ENCODE measurements at regions of chr5 and their contacts with region 1.

Region 1: DNA sequence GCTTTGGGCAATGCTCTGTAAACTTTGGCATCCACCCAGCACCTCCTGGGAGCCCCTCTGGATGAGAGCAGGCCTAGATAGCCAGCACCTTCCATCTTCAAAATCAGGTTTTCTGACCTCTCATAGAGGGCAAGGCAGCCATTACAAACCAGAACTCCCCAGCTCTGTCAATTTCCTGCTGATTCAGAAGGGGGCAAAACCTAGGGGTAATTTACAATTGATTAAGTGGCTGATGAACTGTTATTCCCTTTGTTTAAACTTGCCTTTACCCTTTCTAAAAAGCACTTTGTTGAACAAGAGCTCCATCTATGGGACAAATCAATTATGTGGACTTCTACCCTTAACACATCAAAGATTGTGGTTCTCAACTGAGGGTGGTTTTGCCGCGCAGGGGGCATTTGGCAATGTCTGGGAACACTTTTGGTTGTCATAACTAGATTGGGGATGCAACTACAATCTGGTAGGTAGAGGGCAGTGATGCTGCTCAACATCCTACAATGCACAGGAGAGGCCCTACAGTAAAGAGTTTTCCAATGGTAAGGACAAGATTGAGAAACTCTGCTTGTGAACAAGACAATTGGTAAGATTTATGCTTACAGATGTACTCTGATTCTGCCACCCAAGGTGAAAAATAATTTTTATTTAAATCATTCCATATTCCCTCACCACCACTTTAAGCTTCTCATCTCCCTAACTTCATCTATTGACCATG is 184.1 kb downstream of the MARCHF11 start:
- DNase-seq: peak; percentile 67
- H3K4me3 ChIP-seq: no peak overlapping the region
- H3K27ac ChIP-seq: peak overlapping the region; percentile 20
- H3K4me1 ChIP-seq: peaks cover 27% of the 10 kb centered on the region
- H3K27me3 ChIP-seq: peaks cover 0 to 2% of the 10 kb centered on the region in 2 experiments
- CTCF ChIP-seq: peak; percentile 54 to 60
- POLR2A ChIP-seq: no peak

Region 2: GRCh38 chr5:15013654-15014463 is 981.6 kb before region 1 on chr5:
- CTCF ChIA-PET with region 1: no interaction called
- POLR2A ChIA-PET with region 1: no interaction called
- dilution Hi-C with region 1: no loop called
- intact Hi-C with region 1: loop called (anchors 5 kb)
- DNase-seq: peak; percentile 74
- H3K4me3 ChIP-seq: no peak overlapping the region
- H3K27ac ChIP-seq: no peak overlapping the region
- H3K4me1 ChIP-seq: peaks cover 11% of the 10 kb centered on the region
- H3K27me3 ChIP-seq: peaks cover 0 to 5% of the 10 kb centered on the region in 2 experiments
- CTCF ChIP-seq: peak; percentile 38 to 39
- POLR2A ChIP-seq: no peak

Region 3: DNA sequence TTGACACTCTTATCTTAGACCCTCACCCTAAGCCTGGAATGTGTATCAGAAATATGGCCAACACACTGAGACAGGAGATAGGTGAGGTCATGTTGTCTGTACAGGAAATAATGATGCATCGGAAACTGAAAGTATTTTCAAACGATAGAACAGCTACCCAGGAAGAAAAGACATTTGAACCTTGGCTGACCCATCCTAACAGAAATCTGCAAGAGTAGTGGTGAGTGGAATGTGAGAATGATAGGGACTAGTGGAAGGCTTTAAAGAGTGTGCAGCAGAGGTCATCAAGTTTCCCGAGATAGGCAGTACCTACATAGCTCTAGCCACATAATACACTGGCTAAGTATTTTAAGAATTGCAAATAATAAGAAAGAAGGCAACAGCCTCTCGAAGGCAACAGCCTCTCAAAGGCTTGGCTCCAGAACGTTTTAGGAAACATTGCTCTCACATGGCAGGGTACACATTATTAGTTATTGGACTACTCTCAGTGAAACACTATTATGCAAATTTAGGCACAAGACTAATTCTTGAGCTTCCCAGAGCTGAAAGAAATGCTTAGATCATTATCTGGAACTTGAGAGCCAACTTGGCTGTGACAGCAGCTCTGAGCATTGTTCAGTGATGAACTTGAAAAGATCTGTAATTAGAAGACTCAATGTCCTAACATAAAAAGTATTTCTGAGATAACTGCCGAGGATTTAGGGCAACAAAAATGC is 628.7 kb before region 1 on chr5:
- CTCF ChIA-PET with region 1: interaction called, 6 read pairs
- POLR2A ChIA-PET with region 1: no interaction called
- dilution Hi-C with region 1: no loop called
- intact Hi-C with region 1: loop called (anchors 1 kb)
- DNase-seq: peak; percentile 91
- H3K4me3 ChIP-seq: no peak overlapping the region
- H3K27ac ChIP-seq: peak overlapping the region; percentile 83
- H3K4me1 ChIP-seq: peaks cover 43% of the 10 kb centered on the region
- H3K27me3 ChIP-seq: no peaks in the 10 kb centered on the region
- CTCF ChIP-seq: no peak
- POLR2A ChIP-seq: no peak

Region 4: GRCh38 chr5:15499528-15500324 is 495.8 kb before region 1 on chr5 and contains the start of gene FBXL7:
- CTCF ChIA-PET with region 1: interaction called, 21 read pairs
- POLR2A ChIA-PET with region 1: no interaction called
- dilution Hi-C with region 1: no loop called
- intact Hi-C with region 1: loop called (anchors 1 kb)
- DNase-seq: peak; percentile 81
- H3K4me3 ChIP-seq: peak within 1 kb of the TSS; percentile 83 to 98 (median 88)
- H3K27ac ChIP-seq: peak within 1 kb of the TSS; percentile 66
- H3K4me1 ChIP-seq: peaks cover 34% of the 10 kb centered on the region
- H3K27me3 ChIP-seq: no peaks in the 10 kb centered on the region
- CTCF ChIP-seq: peak in 1 of 2 donors; percentile 24
- POLR2A ChIP-seq: peak; percentile 88
- total RNA-seq, gene FBXL7: 28.6 and 32.2 TPM in 2 replicates

Region 5: GRCh38 chr5:15794052-15794985 is 201.2 kb before region 1 on chr5:
- CTCF ChIA-PET with region 1: interaction called, 24 read pairs
- POLR2A ChIA-PET with region 1: no interaction called
- dilution Hi-C with region 1: no loop called
- intact Hi-C with region 1: loop called (anchors 1 kb)
- DNase-seq: peak; percentile 74
- H3K4me3 ChIP-seq: no peak overlapping the region
- H3K27ac ChIP-seq: peak overlapping the region; percentile 41
- H3K4me1 ChIP-seq: peaks cover 30% of the 10 kb centered on the region
- H3K27me3 ChIP-seq: no peaks in the 10 kb centered on the region
- CTCF ChIP-seq: peak in 1 of 2 donors; percentile 15
- POLR2A ChIP-seq: no peak

Region 6: GRCh38 chr5:15834596-15835245 is 160.8 kb before region 1 on chr5:
- CTCF ChIA-PET with region 1: interaction called, 22 read pairs
- POLR2A ChIA-PET with region 1: no interaction called
- dilution Hi-C with region 1: no loop called
- intact Hi-C with region 1: loop called (anchors 1 kb)
- DNase-seq: peak; percentile 94
- H3K4me3 ChIP-seq: peak overlapping the region in 1 of 3 experiments; percentile 27
- H3K27ac ChIP-seq: peak overlapping the region; percentile 79
- H3K4me1 ChIP-seq: peaks cover 24% of the 10 kb centered on the region
- H3K27me3 ChIP-seq: no peaks in the 10 kb centered on the region
- CTCF ChIP-seq: no peak
- POLR2A ChIP-seq: no peak

Region 7: GRCh38 chr5:16057277-16057676 is 61.8 kb after region 1 on chr5:
- CTCF ChIA-PET with region 1: no interaction called
- POLR2A ChIA-PET with region 1: no interaction called
- dilution Hi-C with region 1: no loop called
- intact Hi-C with region 1: no loop called
- DNase-seq: no peak
- H3K4me3 ChIP-seq: no peak overlapping the region
- H3K27ac ChIP-seq: no peak overlapping the region
- H3K4me1 ChIP-seq: no peaks in the 10 kb centered on the region
- H3K27me3 ChIP-seq: no peaks in the 10 kb centered on the region
- CTCF ChIP-seq: no peak
- POLR2A ChIP-seq: no peak